ENCODE measurements at regions of chr2 and their contacts with region 1.

Region 1: DNA sequence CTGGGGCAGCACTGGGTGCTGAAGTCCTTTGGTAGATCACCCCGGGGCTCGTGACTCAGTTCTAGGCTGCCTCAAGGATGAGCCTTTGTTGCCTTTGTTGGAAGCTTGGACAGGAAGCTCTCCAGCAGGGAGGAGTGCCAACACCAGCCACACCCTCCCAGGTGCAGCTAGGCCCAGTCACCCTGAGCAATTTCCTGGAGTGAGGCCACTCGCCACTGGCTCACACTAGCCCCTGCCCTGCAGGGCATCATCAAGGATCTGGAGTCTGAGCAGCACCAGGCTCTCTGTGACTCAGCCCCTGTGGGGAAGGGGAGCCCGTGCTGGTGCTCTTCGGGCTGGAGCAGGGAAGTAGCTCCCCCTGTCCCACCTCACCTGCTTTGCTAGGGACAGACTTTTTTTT is 6.7 kb upstream of the SDC1 start:
- DNase-seq: peak; percentile 100
- H3K4me3 ChIP-seq: no peak overlapping the region
- H3K27ac ChIP-seq: peak overlapping the region; percentile 100
- H3K4me1 ChIP-seq: peaks cover 45% of the 10 kb centered on the region
- H3K27me3 ChIP-seq: no peaks in the 10 kb centered on the region
- CTCF ChIP-seq: peak in 1 of 2 donors; percentile 29

Region 2: GRCh38 chr2:20051532-20052228 is 180.0 kb before region 1 on chr2 and contains the start of gene LAPTM4A:
- CTCF ChIA-PET with region 1: no interaction called
- dilution Hi-C with region 1: no loop called
- in situ Hi-C with region 1: no loop called
- intact Hi-C with region 1: loop called (anchors 1 kb)
- DNase-seq: peak; percentile 100
- H3K4me3 ChIP-seq: peak within 1 kb of the TSS; percentile 75 to 97 (median 87)
- H3K27ac ChIP-seq: peak within 1 kb of the TSS; percentile 93
- H3K4me1 ChIP-seq: peaks cover 22% of the 10 kb centered on the region
- H3K27me3 ChIP-seq: no peaks in the 10 kb centered on the region
- CTCF ChIP-seq: peak in 1 of 2 donors; percentile 3
- total RNA-seq, gene LAPTM4A: 160 to 162 TPM

Region 3: GRCh38 chr2:20164061-20164733 is 67.4 kb before region 1 on chr2:
- CTCF ChIA-PET with region 1: no interaction called
- dilution Hi-C with region 1: no loop called
- in situ Hi-C with region 1: no loop called
- intact Hi-C with region 1: no loop called
- DNase-seq: no peak
- H3K4me3 ChIP-seq: no peak overlapping the region
- H3K27ac ChIP-seq: no peak overlapping the region
- H3K4me1 ChIP-seq: peaks cover 24% of the 10 kb centered on the region
- H3K27me3 ChIP-seq: no peaks in the 10 kb centered on the region
- CTCF ChIP-seq: no peak

Region 4: GRCh38 chr2:20186078-20186854 is 45.4 kb before region 1 on chr2:
- CTCF ChIA-PET with region 1: no interaction called
- dilution Hi-C with region 1: loop called (anchors 5 kb)
- in situ Hi-C with region 1: no loop called
- intact Hi-C with region 1: no loop called
- DNase-seq: no peak
- H3K4me3 ChIP-seq: no peak overlapping the region
- H3K27ac ChIP-seq: no peak overlapping the region
- H3K4me1 ChIP-seq: peaks cover 42% of the 10 kb centered on the region
- H3K27me3 ChIP-seq: no peaks in the 10 kb centered on the region
- CTCF ChIP-seq: no peak

Region 5: DNA sequence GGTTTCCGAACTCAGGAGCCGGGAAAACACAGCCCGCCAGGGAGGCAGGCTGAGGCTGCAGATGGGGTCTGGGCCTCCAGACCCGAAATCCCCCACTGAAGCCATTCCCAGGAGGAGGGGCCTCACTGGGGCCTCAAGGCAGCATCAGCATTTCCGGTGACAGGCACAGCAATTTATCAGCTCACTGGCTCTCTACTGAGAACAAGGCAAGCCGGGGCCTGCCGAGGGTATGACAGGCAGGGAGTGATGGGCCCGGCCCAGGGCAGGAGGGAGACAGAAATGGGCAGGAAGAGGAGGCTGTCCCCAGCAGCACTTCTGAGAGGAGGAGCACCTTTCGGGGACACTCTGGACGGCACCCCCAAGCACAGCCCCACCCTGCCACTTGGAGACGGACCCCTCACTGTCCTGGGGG is 19.2 kb before region 1 on chr2:
- CTCF ChIA-PET with region 1: no interaction called
- dilution Hi-C with region 1: no loop called
- in situ Hi-C with region 1: no loop called
- intact Hi-C with region 1: loop called (anchors 1 kb)
- DNase-seq: peak; percentile 96
- H3K4me3 ChIP-seq: peak overlapping the region in 2 of 3 experiments; percentile 13 to 19
- H3K27ac ChIP-seq: peak overlapping the region; percentile 90
- H3K4me1 ChIP-seq: peaks cover 100% of the 10 kb centered on the region
- H3K27me3 ChIP-seq: no peaks in the 10 kb centered on the region
- CTCF ChIP-seq: no peak

Region 6: GRCh38 chr2:20282916-20283592 is 51.4 kb after region 1 on chr2:
- CTCF ChIA-PET with region 1: no interaction called
- dilution Hi-C with region 1: no loop called
- in situ Hi-C with region 1: no loop called
- intact Hi-C with region 1: no loop called
- DNase-seq: no peak
- H3K4me3 ChIP-seq: no peak overlapping the region
- H3K27ac ChIP-seq: no peak overlapping the region
- H3K4me1 ChIP-seq: no peaks in the 10 kb centered on the region
- H3K27me3 ChIP-seq: no peaks in the 10 kb centered on the region
- CTCF ChIP-seq: no peak

Region 7: GRCh38 chr2:20542746-20543468 is 311.3 kb after region 1 on chr2:
- CTCF ChIA-PET with region 1: no interaction called
- dilution Hi-C with region 1: no loop called
- in situ Hi-C with region 1: no loop called
- intact Hi-C with region 1: no loop called
- DNase-seq: no peak
- H3K4me3 ChIP-seq: no peak overlapping the region
- H3K27ac ChIP-seq: no peak overlapping the region
- H3K4me1 ChIP-seq: peaks cover 8% of the 10 kb centered on the region
- H3K27me3 ChIP-seq: no peaks in the 10 kb centered on the region
- CTCF ChIP-seq: no peak

Region 8: GRCh38 chr2:20584637-20585321 is 353.1 kb after region 1 on chr2:
- CTCF ChIA-PET with region 1: no interaction called
- dilution Hi-C with region 1: no loop called
- in situ Hi-C with region 1: no loop called
- intact Hi-C with region 1: loop called (anchors 5 kb)
- DNase-seq: peak; percentile 73
- H3K4me3 ChIP-seq: no peak overlapping the region
- H3K27ac ChIP-seq: no peak overlapping the region
- H3K4me1 ChIP-seq: peaks cover 25% of the 10 kb centered on the region
- H3K27me3 ChIP-seq: no peaks in the 10 kb centered on the region
- CTCF ChIP-seq: no peak

Measured in mammary epithelial cell (primary cell).